BJ (cell line): ENCODE measurements at regions of chr2 and their contacts with region 1.

Region 1: DNA sequence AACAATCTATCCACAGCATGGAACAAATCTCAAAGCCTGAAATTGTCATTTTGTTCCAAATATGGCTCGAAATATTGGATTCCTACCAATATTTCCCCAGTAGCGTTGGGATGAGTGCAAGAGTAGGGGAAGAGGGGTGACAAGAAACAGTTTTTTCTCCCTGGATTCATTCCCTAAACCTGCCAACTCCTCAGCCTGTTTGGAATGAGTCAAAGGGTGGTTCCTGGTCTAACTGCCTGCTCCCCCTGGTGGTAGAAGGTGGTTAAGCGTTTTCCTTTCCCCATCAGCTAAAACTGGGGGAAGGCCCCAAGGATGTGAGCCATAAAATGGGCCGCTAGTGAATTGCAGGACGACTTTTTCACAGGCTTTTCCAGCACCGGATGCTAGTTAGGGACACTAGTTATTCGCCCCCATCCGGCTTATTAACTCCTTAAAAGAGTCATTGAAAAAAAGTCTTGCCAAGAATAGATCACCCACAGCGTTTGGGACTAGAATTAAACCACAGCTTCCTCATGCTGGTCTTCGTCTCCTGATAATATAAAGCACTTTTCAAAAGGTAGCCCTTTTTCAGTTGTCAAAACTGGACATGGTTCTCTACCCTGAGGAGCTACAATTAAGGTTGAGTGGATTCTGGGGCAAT is 72.5 kb downstream of the DHRS9 start:
- DNase-seq: no peak
- H3K4me3 ChIP-seq: no peak overlapping the region
- H3K27me3 ChIP-seq: no peaks in the 10 kb centered on the region
- CTCF ChIP-seq: peak; percentile 89

Region 2: DNA sequence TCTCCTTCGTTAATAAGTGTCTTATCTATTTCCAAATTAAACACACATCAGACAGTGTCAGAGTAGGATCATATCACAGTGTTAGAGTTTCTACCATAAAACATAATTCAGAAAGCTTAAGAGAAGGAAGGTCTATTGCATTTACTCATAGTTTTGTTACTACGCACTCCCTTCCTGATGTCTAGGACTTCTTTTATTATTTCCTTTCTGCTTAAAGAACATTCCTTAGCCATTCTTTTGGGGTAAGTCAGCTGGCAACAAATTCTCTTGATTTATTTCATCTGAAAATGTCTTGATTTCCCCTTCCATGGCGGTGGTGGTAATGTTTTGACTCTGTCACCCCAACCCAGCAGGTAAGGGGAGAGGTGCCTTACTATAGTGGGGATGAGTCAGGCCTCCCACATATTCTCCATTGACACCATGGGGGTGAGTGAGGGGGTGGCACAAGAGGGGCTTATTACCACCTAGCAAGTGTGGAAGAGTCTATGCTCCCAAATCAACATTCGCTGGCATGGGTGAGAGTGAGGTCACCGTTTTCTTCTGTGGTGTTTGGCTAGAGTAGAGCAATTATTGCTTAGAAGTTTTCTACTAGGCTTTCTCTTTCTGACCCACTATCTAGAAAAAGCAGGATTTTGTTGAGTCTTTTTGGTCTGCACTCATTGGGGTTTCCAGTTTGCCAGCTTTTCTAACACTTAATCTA is 140.6 kb before region 1 on chr2:
- CTCF ChIA-PET with region 1: no interaction called
- POLR2A ChIA-PET with region 1: no interaction called
- DNase-seq: no peak
- H3K4me3 ChIP-seq: no peak overlapping the region
- H3K27me3 ChIP-seq: no peaks in the 10 kb centered on the region
- CTCF ChIP-seq: no peak

Region 3: GRCh38 chr2:169330555-169331198 is 188.8 kb after region 1 on chr2:
- CTCF ChIA-PET with region 1: no interaction called
- POLR2A ChIA-PET with region 1: interaction called, 20 read pairs
- DNase-seq: no peak
- H3K4me3 ChIP-seq: no peak overlapping the region
- H3K27me3 ChIP-seq: no peaks in the 10 kb centered on the region
- CTCF ChIP-seq: no peak